PC-3 (cell line): ENCODE measurements at regions of chr6 and their contacts with region 1.

Region 1: GRCh38 chr6:79384845-79385244 is 150.4 kb upstream of the HMGN3 start:
- DNase-seq: peak; percentile 35
- ATAC-seq: peak; percentile 53
- H3K4me3 ChIP-seq: no peak overlapping the region
- H3K27ac ChIP-seq: peak overlapping the region; percentile 89
- H3K4me1 ChIP-seq: peaks cover 27% of the 10 kb centered on the region
- H3K27me3 ChIP-seq: no peaks in the 10 kb centered on the region
- CTCF ChIP-seq: no peak

Region 2: GRCh38 chr6:79078075-79079025 is 306.5 kb before region 1 on chr6 and contains the start of gene PHIP:
- CTCF ChIA-PET with region 1: no interaction called
- POLR2A ChIA-PET with region 1: no interaction called
- intact Hi-C with region 1: loop called (anchors 2 kb)
- DNase-seq: peak; percentile 79
- ATAC-seq: peak; percentile 66
- H3K4me3 ChIP-seq: peak within 1 kb of the TSS; percentile 99
- H3K27ac ChIP-seq: peak within 1 kb of the TSS; percentile 75
- H3K4me1 ChIP-seq: peaks cover 11% of the 10 kb centered on the region; the same call in 1 of the 2 replicates
- H3K27me3 ChIP-seq: no peaks in the 10 kb centered on the region
- CTCF ChIP-seq: no peak
- total RNA-seq, gene PHIP: 20.8 and 21.2 TPM in 2 replicates

Region 3: GRCh38 chr6:79421707-79422484 is 37.1 kb after region 1 on chr6:
- CTCF ChIA-PET with region 1: no interaction called
- POLR2A ChIA-PET with region 1: no interaction called
- intact Hi-C with region 1: loop called (anchors 5 kb)
- DNase-seq: peak; percentile 87
- ATAC-seq: peak; percentile 80
- H3K4me3 ChIP-seq: peak overlapping the region; percentile 25; the same call in 1 of the 2 replicates
- H3K27ac ChIP-seq: peak overlapping the region; percentile 24; the same call in 1 of the 2 replicates
- H3K4me1 ChIP-seq: peaks cover 7% of the 10 kb centered on the region
- H3K27me3 ChIP-seq: no peaks in the 10 kb centered on the region
- CTCF ChIP-seq: no peak

Region 4: DNA sequence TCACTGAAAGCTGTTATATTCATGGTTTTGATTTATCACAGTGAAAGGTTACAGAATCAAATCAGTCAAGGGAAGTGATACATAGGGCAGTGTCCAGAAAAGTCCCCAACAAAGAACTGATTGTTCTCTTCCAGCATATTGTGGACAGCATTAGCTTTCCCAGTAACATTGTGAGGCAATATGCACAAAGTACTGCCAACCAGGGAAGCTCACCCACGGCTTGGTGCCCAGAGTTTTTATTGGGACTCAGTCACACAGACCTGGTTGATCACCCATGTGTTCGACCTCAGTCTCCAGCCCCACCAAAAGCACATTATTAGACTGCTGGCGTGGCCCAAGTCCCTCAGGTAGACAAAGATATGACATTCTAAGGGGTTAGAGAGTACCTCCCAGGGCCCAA is 76.4 kb after region 1 on chr6:
- CTCF ChIA-PET with region 1: no interaction called
- POLR2A ChIA-PET with region 1: interaction called, 3 read pairs
- intact Hi-C with region 1: loop called (anchors 1 kb)
- DNase-seq: peak; percentile 49
- ATAC-seq: peak; percentile 73
- H3K4me3 ChIP-seq: no peak overlapping the region
- H3K27ac ChIP-seq: no peak overlapping the region
- H3K4me1 ChIP-seq: peaks cover 21% of the 10 kb centered on the region
- H3K27me3 ChIP-seq: no peaks in the 10 kb centered on the region
- CTCF ChIP-seq: no peak

Region 5: DNA sequence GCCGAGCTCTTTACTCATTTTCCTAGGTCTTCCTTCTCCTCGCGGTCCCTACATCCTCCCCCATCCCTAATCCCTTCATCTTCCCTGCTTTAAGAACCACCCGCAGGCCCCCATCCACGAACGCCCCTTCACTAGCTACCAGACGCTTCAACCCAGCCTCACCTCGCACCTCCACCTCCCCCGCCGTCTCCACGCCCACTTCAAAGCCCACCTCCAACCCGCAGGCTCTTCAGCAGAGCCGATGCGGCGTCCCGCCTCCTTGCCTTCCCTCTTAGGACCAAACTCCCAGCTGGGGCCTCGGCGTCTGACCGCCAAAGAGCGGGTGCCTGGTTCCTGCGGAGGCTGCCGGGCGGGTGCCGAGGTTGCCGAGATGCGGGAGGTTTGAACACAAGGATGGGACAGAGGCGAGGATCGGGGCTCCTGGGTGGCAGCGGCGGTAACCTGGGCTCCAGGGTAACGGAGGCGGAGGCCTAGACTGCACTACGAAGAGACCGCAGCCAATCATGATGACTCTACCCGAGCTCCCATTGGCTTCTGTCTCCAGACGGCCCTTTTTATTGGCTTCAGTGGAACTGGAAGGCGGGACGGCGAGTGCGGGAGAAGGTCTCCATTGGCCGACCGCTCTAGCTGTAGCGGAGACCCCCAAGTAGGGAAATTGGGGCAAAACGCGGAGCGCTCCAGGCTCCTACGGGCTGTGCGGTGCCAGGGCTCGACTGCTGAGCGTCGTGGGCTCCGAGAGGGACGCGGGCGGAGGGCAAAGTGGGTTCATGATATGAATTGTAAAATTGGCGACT is 152.3 kb after region 1 on chr6 and contains the start of gene LCA5:
- CTCF ChIA-PET with region 1: no interaction called
- POLR2A ChIA-PET with region 1: no interaction called
- intact Hi-C with region 1: loop called (anchors 5 kb)
- DNase-seq: peak; percentile 92
- ATAC-seq: peak; percentile 95
- H3K4me3 ChIP-seq: peak within 1 kb of the TSS; percentile 93
- H3K27ac ChIP-seq: peak within 1 kb of the TSS; percentile 41
- H3K4me1 ChIP-seq: no peaks in the 10 kb centered on the region
- H3K27me3 ChIP-seq: no peaks in the 10 kb centered on the region
- CTCF ChIP-seq: no peak
- total RNA-seq, gene LCA5: 0.73 and 0.86 TPM in 2 replicates